CD4-positive, alpha-beta T cell (primary cell): ENCODE measurements at regions of chr11 and their contacts with region 1.

Region 1: DNA sequence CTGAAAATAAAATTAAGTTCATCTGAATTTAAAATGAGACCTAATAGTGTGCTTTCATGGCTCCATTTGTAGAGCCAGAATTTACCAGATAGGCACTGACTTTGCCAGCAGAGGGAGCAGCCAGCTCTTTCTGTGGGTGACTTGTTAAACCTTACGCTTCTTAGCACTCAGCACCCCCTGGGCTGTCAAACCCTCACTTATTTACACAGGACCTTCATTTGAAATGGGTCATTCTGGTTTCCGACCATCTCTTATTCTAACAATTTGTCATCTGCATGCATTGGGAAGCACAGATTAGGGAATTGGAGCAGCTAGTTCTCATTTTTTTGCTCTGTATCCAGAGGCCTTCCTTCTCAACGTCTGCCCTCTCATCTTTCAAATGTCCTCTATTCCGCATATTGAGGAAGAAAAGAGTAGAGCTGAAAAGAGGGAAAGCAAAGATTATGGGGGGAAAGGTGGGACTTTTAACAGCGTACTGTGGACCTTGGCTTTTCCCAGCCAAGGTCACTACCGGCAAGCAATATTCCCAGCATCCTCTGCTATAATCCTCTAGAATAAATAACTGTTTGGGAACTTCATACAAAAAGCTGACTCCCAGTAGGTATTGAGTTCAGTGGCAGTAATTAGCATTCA is 3.1 kb downstream of the ASRGL1 start:
- DNase-seq: peak; percentile 25 to 78 (median 41)
- ATAC-seq: peak; percentile 68
- H3K4me3 ChIP-seq: no peak overlapping the region
- H3K4me3 Mint-ChIP-seq: peak overlapping the region; percentile 25
- H3K27ac ChIP-seq: no peak overlapping the region
- H3K27ac Mint-ChIP-seq: no peak overlapping the region
- H3K4me1 ChIP-seq: peaks cover 12% of the 10 kb centered on the region
- H3K4me1 Mint-ChIP-seq: peaks cover 15% of the 10 kb centered on the region
- H3K27me3 ChIP-seq: peaks cover 0 to 4% of the 10 kb centered on the region in 2 experiments
- H3K27me3 Mint-ChIP-seq: peaks cover 32% of the 10 kb centered on the region
- CTCF ChIP-seq: peak; percentile 60

Region 2: GRCh38 chr11:62372871-62373270 is 32.5 kb after region 1 on chr11:
- CTCF ChIA-PET with region 1: interaction called, 6 read pairs
- POLR2A ChIA-PET with region 1: interaction called, 5 read pairs
- intact Hi-C with region 1: loop called (anchors 1 kb)
- DNase-seq: no peak
- ATAC-seq: no peak
- H3K4me3 ChIP-seq: no peak overlapping the region
- H3K4me3 Mint-ChIP-seq: no peak overlapping the region
- H3K27ac ChIP-seq: no peak overlapping the region
- H3K27ac Mint-ChIP-seq: no peak overlapping the region
- H3K4me1 ChIP-seq: peaks cover 21% of the 10 kb centered on the region
- H3K4me1 Mint-ChIP-seq: peaks cover 17% of the 10 kb centered on the region
- H3K27me3 ChIP-seq: no peaks in the 10 kb centered on the region
- H3K27me3 Mint-ChIP-seq: no peaks in the 10 kb centered on the region
- CTCF ChIP-seq: no peak

Region 3: GRCh38 chr11:62419314-62419929 is 79.0 kb after region 1 on chr11:
- CTCF ChIA-PET with region 1: no interaction called
- POLR2A ChIA-PET with region 1: no interaction called
- intact Hi-C with region 1: no loop called
- DNase-seq: no peak
- ATAC-seq: no peak
- H3K4me3 ChIP-seq: no peak overlapping the region
- H3K4me3 Mint-ChIP-seq: no peak overlapping the region
- H3K27ac ChIP-seq: no peak overlapping the region
- H3K27ac Mint-ChIP-seq: no peak overlapping the region
- H3K4me1 ChIP-seq: peaks cover under 1% of the 10 kb centered on the region
- H3K4me1 Mint-ChIP-seq: peaks cover 2% of the 10 kb centered on the region
- H3K27me3 ChIP-seq: no peaks in the 10 kb centered on the region
- H3K27me3 Mint-ChIP-seq: no peaks in the 10 kb centered on the region
- CTCF ChIP-seq: no peak